GM12878 (cell line): ENCODE measurements at regions of chr10 and their contacts with region 1.

Region 1: GRCh38 chr10:11515596-11516430 is 95.6 kb downstream of the USP6NL start:
- DNase-seq: peak; percentile 67
- ATAC-seq: peak; percentile 86
- H3K4me3 ChIP-seq: peak overlapping the region; percentile 38; the same call in 1 of the 2 replicates
- H3K27ac ChIP-seq: peak overlapping the region; percentile 80
- H3K4me1 ChIP-seq: peaks cover 24% of the 10 kb centered on the region
- H3K27me3 ChIP-seq: no peaks in the 10 kb centered on the region
- CTCF ChIP-seq: peak; percentile 85 to 93 (median 88); a peak in 5 of 6 replicates
- EP300 ChIP-seq: no peak
- POLR2A ChIP-seq: no peak
- RAD21 ChIP-seq: peak; percentile 97

Region 2: DNA sequence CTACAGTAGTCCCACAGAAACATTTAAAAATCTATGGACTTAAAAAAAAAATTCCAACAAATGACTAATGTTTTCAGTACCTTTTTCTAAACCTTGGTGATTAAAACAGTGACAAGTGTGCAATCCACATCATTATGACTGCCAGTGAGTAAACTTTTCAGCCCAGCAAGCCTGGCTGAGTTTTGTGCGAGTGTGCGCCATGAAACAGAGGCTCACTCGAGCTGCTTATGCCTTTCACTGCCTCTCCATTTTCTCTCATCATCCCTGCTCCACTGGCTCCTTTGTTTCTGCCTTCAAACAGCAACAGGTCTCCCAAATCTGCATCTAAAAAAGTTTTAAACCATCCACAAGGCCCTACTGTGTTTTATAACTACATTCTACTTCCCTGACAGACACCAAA is 10.2 kb before region 1 on chr10:
- CTCF ChIA-PET with region 1: interaction called, 10 read pairs
- POLR2A ChIA-PET with region 1: no interaction called
- RAD21 ChIA-PET with region 1: interaction called, 7 read pairs
- SMC1A ChIA-PET with region 1: interaction called, 14 read pairs
- in situ Hi-C with region 1: no loop called
- intact Hi-C with region 1: no loop called
- DNase-seq: no peak
- ATAC-seq: peak; percentile 72
- H3K4me3 ChIP-seq: no peak overlapping the region
- H3K27ac ChIP-seq: peak overlapping the region; percentile 13; the same call in 1 of the 2 replicates
- H3K4me1 ChIP-seq: no peaks in the 10 kb centered on the region
- H3K27me3 ChIP-seq: no peaks in the 10 kb centered on the region
- CTCF ChIP-seq: no peak
- EP300 ChIP-seq: no peak
- POLR2A ChIP-seq: no peak
- RAD21 ChIP-seq: no peak

Region 3: GRCh38 chr10:11551916-11552602 is 36.2 kb after region 1 on chr10:
- CTCF ChIA-PET with region 1: interaction called, 4 read pairs
- POLR2A ChIA-PET with region 1: interaction called, 3 read pairs
- RAD21 ChIA-PET with region 1: interaction called, 8 read pairs
- SMC1A ChIA-PET with region 1: interaction called, 12 read pairs
- in situ Hi-C with region 1: no loop called
- intact Hi-C with region 1: no loop called
- DNase-seq: no peak
- ATAC-seq: peak; percentile 44
- H3K4me3 ChIP-seq: no peak overlapping the region
- H3K27ac ChIP-seq: peak overlapping the region; percentile 45; the same call in 1 of the 2 replicates
- H3K4me1 ChIP-seq: peaks cover 58% of the 10 kb centered on the region
- H3K27me3 ChIP-seq: no peaks in the 10 kb centered on the region
- CTCF ChIP-seq: no peak
- EP300 ChIP-seq: no peak
- POLR2A ChIP-seq: no peak
- RAD21 ChIP-seq: no peak

Region 4: GRCh38 chr10:11631890-11632587 is 116.2 kb after region 1 on chr10:
- CTCF ChIA-PET with region 1: interaction called, 10 read pairs
- POLR2A ChIA-PET with region 1: no interaction called
- RAD21 ChIA-PET with region 1: no interaction called
- SMC1A ChIA-PET with region 1: interaction called, 9 read pairs
- in situ Hi-C with region 1: no loop called
- intact Hi-C with region 1: no loop called
- DNase-seq: peak; percentile 88
- ATAC-seq: peak; percentile 100
- H3K4me3 ChIP-seq: no peak overlapping the region
- H3K27ac ChIP-seq: peak overlapping the region; percentile 25; the same call in 1 of the 2 replicates
- H3K4me1 ChIP-seq: peaks cover 13% of the 10 kb centered on the region
- H3K27me3 ChIP-seq: no peaks in the 10 kb centered on the region
- CTCF ChIP-seq: no peak
- EP300 ChIP-seq: peak; percentile 66 to 73; a peak in 3 of 4 replicates
- POLR2A ChIP-seq: no peak
- RAD21 ChIP-seq: no peak

Region 5: GRCh38 chr10:11698691-11699549 is 183.1 kb after region 1 on chr10:
- CTCF ChIA-PET with region 1: interaction called, 6 read pairs
- POLR2A ChIA-PET with region 1: no interaction called
- RAD21 ChIA-PET with region 1: interaction called, 3 read pairs
- SMC1A ChIA-PET with region 1: interaction called, 4 read pairs
- in situ Hi-C with region 1: no loop called
- intact Hi-C with region 1: loop called (anchors 1 kb)
- DNase-seq: peak; percentile 77
- ATAC-seq: peak; percentile 83
- H3K4me3 ChIP-seq: no peak overlapping the region
- H3K27ac ChIP-seq: peak overlapping the region; percentile 86
- H3K4me1 ChIP-seq: peaks cover 28% of the 10 kb centered on the region
- H3K27me3 ChIP-seq: no peaks in the 10 kb centered on the region
- CTCF ChIP-seq: no peak
- EP300 ChIP-seq: peak in 1 of 2 experiments; percentile 88; a peak in 2 of 4 replicates
- POLR2A ChIP-seq: no peak
- RAD21 ChIP-seq: 0 out of 2 replicates have a peak, but pooled peaks have one; percentile 5